ENCODE measurements at regions of chr2 and their contacts with region 1.

Region 1: GRCh38 chr2:6589150-6589549 is 276.6 kb downstream of the CMPK2 start:
- DNase-seq: no peak
- H3K4me3 ChIP-seq: no peak overlapping the region
- H3K27ac ChIP-seq: no peak overlapping the region
- H3K4me1 ChIP-seq: no peaks in the 10 kb centered on the region
- H3K27me3 ChIP-seq: no peaks in the 10 kb centered on the region
- CTCF ChIP-seq: no peak
- POLR2A ChIP-seq: no peak

Region 2: DNA sequence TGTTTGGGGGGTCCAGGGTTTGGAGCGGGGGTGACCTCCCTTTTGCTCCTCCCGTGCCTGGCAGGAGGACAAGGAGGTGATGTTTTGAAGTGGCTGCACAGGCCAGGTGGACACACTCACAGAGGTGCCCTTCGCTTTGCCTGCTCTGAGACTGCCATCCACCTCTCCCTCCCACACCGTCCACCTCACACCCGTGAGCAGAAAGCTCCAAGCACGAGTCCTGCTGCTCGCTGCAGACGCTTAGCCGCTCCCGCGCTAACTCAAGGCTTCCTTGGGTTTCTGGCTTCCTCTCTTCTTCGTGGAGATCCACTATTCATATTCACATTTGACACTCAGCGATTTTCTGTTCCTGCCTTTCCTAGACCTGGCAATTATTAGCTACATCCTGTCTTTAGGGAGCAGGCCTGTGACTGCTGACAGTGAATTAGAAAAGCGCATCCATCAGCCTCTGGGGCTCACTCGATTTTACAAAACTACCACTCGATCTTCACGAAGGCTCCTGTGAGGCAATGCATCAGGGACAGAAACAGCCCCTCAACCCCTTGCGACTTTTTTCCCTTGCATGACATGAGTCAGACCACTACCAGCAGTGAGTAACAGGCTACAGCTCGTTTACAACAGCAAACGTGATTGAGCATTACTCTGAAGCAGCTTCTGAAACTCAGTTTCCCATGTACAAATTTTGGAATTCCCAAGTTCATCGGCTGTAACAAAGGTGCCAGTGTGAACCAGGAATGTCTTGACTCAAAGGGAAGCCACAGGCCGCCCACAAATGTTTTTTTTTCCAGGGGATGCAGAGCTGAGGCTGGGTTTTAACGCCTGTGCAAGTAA is 1135.7 kb before region 1 on chr2:
- intact Hi-C with region 1: loop called (anchors 5 kb)
- DNase-seq: no peak
- H3K4me3 ChIP-seq: no peak overlapping the region
- H3K27ac ChIP-seq: no peak overlapping the region
- H3K4me1 ChIP-seq: no peaks in the 10 kb centered on the region
- H3K27me3 ChIP-seq: no peaks in the 10 kb centered on the region
- CTCF ChIP-seq: no peak
- POLR2A ChIP-seq: no peak

Measured in breast epithelium (tissue), 4 donors.